RWPE1 (cell line): ENCODE measurements at regions of chr6 and their contacts with region 1.

Region 1: DNA sequence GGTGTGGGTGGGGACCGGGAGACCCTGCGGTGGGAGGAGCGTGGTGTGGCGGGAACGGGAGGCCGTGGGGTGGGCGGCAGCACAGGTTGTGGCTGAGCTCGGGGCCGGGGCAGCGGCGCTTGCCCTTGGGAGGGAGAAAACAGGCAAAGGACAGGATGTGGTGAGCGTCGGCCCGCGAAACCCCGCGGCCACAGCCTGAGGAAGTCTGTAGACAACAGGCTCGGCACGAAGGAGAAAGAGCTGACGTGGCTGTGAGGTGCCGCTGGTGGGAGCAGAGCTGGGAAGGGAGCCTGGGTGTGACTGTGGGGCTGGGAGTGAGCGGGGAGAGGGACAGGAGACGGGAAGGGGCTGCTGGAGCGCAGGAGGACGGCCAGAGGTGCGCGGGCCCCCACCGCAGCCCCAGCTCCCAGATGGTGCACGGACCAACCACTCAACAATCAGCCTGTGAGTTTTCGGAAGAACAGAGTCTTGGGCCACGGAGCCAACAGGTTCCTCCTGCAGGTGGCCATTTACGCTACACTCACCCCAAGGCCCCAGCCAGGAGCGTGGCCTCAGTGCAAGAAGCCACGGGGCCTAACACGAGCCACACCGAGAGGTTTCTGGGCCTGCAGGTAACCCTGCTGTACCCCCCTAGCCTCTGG is 202.8 kb downstream of the DLL1 start:
- DNase-seq: no peak
- H3K27ac ChIP-seq: no peak overlapping the region
- CTCF ChIP-seq: no peak

Region 2: GRCh38 chr6:169669889-169670288 is 418.2 kb before region 1 on chr6:
- CTCF ChIA-PET with region 1: no interaction called
- POLR2A ChIA-PET with region 1: no interaction called
- DNase-seq: no peak
- H3K27ac ChIP-seq: no peak overlapping the region
- CTCF ChIP-seq: no peak

Region 3: GRCh38 chr6:170225852-170226417 is 137.9 kb after region 1 on chr6:
- CTCF ChIA-PET with region 1: interaction called, 11 read pairs
- POLR2A ChIA-PET with region 1: no interaction called
- DNase-seq: peak; percentile 81
- H3K27ac ChIP-seq: peak overlapping the region; percentile 100
- CTCF ChIP-seq: no peak